Sciatic nerve (tissue), 2 donors: ENCODE measurements at regions of chr16 and their contacts with region 1.

Region 1: DNA sequence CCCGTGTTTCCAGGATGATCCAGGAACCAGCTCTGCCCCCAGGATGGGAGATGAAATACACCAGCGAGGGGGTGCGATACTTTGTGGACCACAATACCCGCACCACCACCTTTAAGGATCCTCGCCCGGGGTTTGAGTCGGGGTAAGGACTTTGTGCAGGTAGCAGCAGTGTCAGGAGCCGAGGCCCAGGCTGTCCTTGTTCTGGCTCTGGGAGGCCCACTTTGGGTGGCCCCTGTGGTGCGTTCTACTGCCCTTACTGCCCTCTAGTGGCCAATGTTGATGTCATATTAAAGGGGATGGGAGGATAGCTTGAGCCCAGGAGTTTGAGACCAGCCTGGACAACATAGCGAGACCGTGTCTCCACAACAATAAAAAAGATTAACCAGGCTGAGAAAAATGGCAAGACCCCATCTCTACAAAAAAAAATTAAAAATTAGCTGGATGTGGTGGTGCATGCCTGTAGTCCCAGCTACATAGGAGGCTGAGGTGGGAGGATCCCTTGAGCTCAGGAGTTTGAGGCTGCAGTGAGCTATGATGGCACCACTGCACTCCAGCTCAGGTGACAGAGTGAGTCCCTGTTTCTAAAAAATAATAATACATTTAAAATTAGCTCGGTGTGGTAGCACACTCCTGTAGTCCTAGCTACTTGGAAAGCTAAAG is 20.9 kb upstream of the CLEC18A start:
- DNase-seq: peak; percentile 70
- ATAC-seq: peak; percentile 63

Region 2: GRCh38 chr16:69554495-69554894 is 375.8 kb before region 1 on chr16:
- intact Hi-C with region 1: no loop called
- DNase-seq: no peak
- ATAC-seq: no peak

Region 3: GRCh38 chr16:69796351-69797118 is 133.7 kb before region 1 on chr16:
- intact Hi-C with region 1: loop called (anchors 2 kb)
- DNase-seq: no peak
- ATAC-seq: peak; percentile 92